Head of caudate nucleus (tissue), 42 donors: ENCODE measurements at regions of chr7 and their contacts with region 1.

Region 1: GRCh38 chr7:80699721-80700256 is 61.3 kb downstream of the CD36 start:
- DNase-seq: no peak

Region 2: GRCh38 chr7:80622541-80622940 is 77.2 kb before region 1 on chr7:
- intact Hi-C with region 1: no loop called
- DNase-seq: no peak

Region 3: GRCh38 chr7:81393018-81393417 is 693.2 kb after region 1 on chr7:
- intact Hi-C with region 1: no loop called
- DNase-seq: no peak

Region 4: GRCh38 chr7:81469869-81470723 is 770.3 kb after region 1 on chr7:
- intact Hi-C with region 1: loop called (anchors 5 kb)
- DNase-seq: peak; percentile 40 to 92 (median 80)